Left ventricle myocardium superior (tissue), 1 donor: ENCODE measurements at regions of chr1 and their contacts with region 1.

Region 1: GRCh38 chr1:203216274-203217138 is 13.0 kb downstream of the CHIT1 start:
- DNase-seq: no peak
- ATAC-seq: peak; percentile 86

Region 2: DNA sequence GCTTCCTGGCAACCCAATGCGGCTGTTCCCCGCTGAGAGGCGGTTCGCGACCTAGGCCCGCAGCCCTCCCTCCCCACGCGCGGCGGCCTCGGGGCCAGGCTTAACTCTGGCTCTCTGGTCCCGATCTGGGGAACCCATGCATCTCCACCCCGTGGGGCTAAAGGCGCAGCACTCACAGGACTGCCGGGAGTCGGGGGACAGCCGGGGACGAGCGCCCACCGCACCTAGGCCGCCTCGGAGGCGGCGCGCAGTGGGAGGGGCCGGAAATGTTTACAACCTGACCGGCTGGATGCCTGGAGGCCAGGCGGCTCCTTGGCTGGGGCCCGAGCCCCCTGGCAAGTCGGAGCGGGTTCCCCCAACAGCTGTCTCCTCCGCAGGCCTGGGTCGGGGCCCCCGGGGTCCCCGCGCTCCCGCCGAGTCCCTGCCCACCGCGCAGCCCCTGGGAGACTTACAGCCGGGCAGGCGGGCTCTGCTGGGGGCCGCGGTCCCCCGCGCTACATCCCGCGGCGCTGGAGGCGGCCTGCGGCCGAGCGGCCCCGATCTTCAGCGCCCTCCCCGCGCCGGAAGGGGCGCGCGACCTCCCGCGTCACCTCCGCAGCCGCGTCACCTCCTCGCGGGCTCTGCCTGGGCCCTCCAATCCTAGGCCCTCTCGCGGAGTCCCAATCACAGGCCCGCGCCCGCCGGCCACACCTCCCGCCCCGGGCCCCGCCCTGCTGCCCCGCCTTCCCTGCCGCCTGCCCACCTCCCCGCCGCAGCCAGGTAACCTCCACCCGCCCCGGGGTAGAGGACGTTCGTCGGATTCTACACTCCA is 258.6 kb before region 1 on chr1 and contains the start of gene ADIPOR1:
- intact Hi-C with region 1: no loop called
- DNase-seq: peak; percentile 95
- ATAC-seq: peak; percentile 98
- total RNA-seq, gene ADIPOR1: 88.1 TPM

Region 3: GRCh38 chr1:203038891-203039608 is 177.5 kb before region 1 on chr1:
- intact Hi-C with region 1: loop called (anchors 5 kb)
- DNase-seq: peak; percentile 85
- ATAC-seq: peak; percentile 80

Region 4: GRCh38 chr1:203117611-203118575 is 98.6 kb before region 1 on chr1:
- intact Hi-C with region 1: loop called (anchors 5 kb)
- DNase-seq: peak; percentile 88
- ATAC-seq: peak; percentile 98

Region 5: DNA sequence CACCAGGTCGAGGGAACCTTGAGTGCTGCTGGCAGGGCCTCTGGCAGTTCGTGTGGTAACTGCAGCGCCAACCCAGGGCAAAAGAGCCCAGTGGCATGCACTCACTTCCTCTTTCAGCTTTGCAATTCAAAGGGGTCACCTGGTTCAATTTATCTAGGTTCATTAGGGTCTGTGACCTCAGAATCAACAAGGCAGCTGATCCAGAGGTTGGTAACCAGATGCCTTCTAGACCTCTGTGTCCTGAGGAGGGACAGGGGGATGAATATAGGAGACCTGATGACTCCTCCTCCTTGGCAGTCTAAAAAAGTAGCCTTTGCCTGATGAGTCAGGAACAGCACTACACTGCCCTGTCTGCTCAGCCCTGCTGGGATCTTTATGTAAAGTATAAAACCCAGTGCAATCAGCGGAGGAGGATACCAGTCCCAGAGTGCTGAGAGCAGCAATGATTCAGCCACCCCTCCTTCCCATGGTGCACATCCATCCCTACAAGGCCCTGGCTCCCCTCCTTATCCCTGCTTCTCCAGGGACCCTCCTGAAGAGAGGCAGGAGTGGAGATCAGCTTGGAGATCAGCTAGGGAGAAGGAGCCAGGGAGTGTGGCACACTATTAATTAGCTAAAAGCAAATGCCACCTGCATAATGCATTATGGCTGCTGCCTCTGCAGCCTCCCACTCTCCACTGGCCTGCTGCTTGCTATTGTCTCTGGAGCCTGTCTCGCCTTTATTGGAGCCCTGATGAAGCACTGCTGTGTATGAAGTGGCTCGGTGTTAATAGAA is 145.6 kb after region 1 on chr1:
- intact Hi-C with region 1: no loop called
- DNase-seq: no peak
- ATAC-seq: no peak